Gastrocnemius medialis (tissue), 4 donors: ENCODE measurements at regions of chr5 and their contacts with region 1.

Region 1: DNA sequence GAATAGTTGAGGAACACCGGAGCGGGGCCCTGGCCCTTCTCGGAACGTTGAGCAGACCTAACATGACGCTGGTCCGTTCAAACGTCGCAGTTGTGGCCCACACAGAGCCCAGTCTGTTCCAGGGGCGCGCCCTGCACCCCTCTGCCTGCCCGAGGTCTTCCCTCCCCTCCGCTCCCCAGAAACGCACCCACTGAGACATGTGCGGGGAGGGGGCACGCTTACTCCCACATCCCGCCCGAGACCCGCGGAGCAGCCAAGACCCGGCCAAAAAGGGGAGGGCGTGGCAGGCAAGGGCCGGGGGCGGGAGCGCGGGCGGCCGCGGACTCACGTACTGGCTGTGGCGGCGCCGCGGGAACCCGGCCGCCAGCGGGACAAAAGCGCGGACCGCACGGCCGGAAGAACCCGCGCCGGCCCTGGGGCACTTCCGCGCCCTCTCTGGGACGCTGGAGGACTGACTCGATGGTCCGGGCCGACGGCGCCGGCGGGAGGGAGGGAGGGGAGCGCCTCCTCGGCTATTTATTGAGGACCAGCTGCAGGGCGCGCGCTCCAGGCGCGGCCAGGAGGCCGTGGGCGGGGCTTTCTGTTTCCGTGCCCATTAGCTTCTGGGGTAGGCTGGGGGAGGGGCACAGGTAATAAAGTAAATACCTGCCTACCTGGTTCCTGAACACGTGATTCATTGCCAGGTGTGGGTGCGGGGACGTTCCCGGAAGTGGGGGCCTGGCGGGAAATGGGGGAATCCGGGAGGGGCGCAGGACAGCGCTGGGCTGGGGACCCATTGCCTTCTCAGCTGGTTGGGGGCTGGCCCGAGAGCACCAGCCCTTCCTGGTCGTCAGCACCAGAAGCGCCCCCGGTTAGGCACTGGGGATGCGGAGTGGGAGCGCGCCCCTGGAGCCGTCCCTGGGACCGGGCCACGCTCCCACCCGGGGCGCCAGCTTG is at the start of gene ZFP62:
- DNase-seq: peak; percentile 69 to 83
- ATAC-seq: peak; percentile 92 to 94
- H3K4me3 ChIP-seq: peak within 1 kb of the TSS; percentile 81 to 99 (median 95)
- H3K27ac ChIP-seq: peak within 1 kb of the TSS; percentile 80 to 94 (median 90)
- H3K4me1 ChIP-seq: peaks cover 8 to 13% of the 10 kb centered on the region in 2 donors
- H3K27me3 ChIP-seq: no peaks in the 10 kb centered on the region
- CTCF ChIP-seq: peak in 2 of 5 experiments; percentile 21 to 33
- POLR2A ChIP-seq: peak; percentile 55 to 71
- total RNA-seq, gene ZFP62: 8.9 to 14.7 (median 10.2) TPM

Region 2: GRCh38 chr5:180790011-180790410 is 71.1 kb before region 1 on chr5:
- in situ Hi-C with region 1: loop called in 1 of 4 experiments (anchors 5 kb)
- intact Hi-C with region 1: loop called (anchors 1 kb)
- DNase-seq: no peak
- ATAC-seq: no peak
- H3K4me3 ChIP-seq: no peak overlapping the region
- H3K27ac ChIP-seq: peak overlapping the region in 1 of 4 donors; percentile 27
- H3K4me1 ChIP-seq: peaks cover 21 to 24% of the 10 kb centered on the region in 2 donors
- H3K27me3 ChIP-seq: no peaks in the 10 kb centered on the region
- CTCF ChIP-seq: no peak
- POLR2A ChIP-seq: no peak

Region 3: GRCh38 chr5:180831139-180832048 is 29.8 kb before region 1 on chr5:
- in situ Hi-C with region 1: no loop called
- intact Hi-C with region 1: loop called (anchors 2 kb)
- DNase-seq: peak; percentile 73 to 81
- ATAC-seq: peak; percentile 88 to 91
- H3K4me3 ChIP-seq: peak overlapping the region; percentile 68 to 98 (median 83)
- H3K27ac ChIP-seq: peak overlapping the region; percentile 90 to 98 (median 96)
- H3K4me1 ChIP-seq: peaks cover 26 to 31% of the 10 kb centered on the region in 2 donors
- H3K27me3 ChIP-seq: no peaks in the 10 kb centered on the region
- CTCF ChIP-seq: peak in 4 of 5 experiments; percentile 7 to 49 (median 36)
- POLR2A ChIP-seq: peak; percentile 79 to 82

Region 4: GRCh38 chr5:181159286-181159829 is 298.2 kb after region 1 on chr5:
- in situ Hi-C with region 1: no loop called
- intact Hi-C with region 1: loop called (anchors 10 kb)
- DNase-seq: peak; percentile 57 to 74
- ATAC-seq: peak; percentile 93 to 95
- H3K4me3 ChIP-seq: no peak overlapping the region
- H3K27ac ChIP-seq: peak overlapping the region in 1 of 4 donors; percentile 72
- H3K4me1 ChIP-seq: no peaks in the 10 kb centered on the region
- H3K27me3 ChIP-seq: peaks cover 0 to 2% (median 1%) of the 10 kb centered on the region in 3 donors
- CTCF ChIP-seq: peak; percentile 60 to 91 (median 81)
- POLR2A ChIP-seq: no peak

Region 5: DNA sequence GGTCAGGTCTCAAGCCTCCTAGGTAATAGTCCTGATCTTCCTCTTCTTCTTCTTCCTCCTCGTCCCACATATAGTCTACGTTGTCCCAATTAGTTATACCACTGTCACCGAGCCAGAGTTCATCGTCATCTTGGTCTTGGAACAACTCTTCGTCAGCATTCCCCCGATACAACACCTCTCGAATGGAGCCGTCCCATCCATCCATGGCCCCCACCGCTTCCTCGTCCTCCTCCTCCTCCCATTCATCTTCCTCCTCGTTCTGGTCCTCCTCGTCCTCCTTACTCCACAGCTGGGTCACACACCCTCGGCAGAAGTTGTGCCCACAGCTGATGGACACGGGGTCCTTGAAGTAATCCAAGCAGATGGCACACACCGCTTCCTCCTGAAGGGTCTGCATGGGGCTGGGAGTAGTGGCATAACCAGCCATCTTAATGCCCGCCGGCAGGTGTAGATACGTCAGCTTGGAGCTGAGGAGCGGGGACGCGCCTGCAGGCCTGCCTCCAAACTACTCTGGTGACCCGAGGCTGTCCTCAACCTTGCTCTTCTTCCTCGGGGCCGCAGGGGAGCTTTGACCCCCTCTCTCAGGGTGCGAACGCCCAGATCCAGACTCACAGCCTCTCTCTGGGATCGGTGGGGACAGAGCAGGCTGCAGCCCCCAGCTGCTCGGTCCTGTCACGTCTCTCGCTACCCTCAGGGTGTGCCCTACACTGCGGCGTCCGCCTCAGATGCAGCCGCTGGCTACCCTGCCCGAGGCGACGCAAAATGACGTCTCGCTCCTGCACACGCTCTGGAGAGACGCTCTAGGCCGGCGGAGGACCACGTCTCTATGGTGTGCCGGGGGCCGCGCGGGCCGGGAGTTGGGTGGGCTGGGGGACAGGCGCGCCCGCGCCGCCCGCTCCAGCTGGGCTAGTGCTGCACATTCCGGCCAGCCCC is 399.5 kb after region 1 on chr5 and contains the start of gene TRIM52:
- in situ Hi-C with region 1: no loop called
- intact Hi-C with region 1: loop called (anchors 10 kb)
- DNase-seq: peak; percentile 89 to 92
- ATAC-seq: peak; percentile 81 to 89
- H3K4me3 ChIP-seq: peak within 1 kb of the TSS; percentile 88 to 100 (median 94)
- H3K27ac ChIP-seq: peak within 1 kb of the TSS; percentile 95 to 100 (median 99)
- H3K4me1 ChIP-seq: peaks cover 53 to 60% of the 10 kb centered on the region in 2 donors
- H3K27me3 ChIP-seq: no peaks in the 10 kb centered on the region
- CTCF ChIP-seq: no peak
- POLR2A ChIP-seq: peak; percentile 96
- total RNA-seq, gene TRIM52: 1.3 to 4.9 (median 3.4) TPM